ENCODE measurements at regions of chr7 and their contacts with region 1.

Region 1: GRCh38 chr7:44565097-44565794 is 8.5 kb downstream of the DDX56 start:
- DNase-seq: peak; percentile 59 to 78 (median 66)
- ATAC-seq: peak; percentile 89
- H3K4me3 ChIP-seq: no peak overlapping the region
- H3K27ac ChIP-seq: peak overlapping the region; percentile 86
- H3K4me1 ChIP-seq: peaks cover 51 to 54% of the 10 kb centered on the region in 2 experiments; a peak in 4 of 5 replicates
- H3K27me3 ChIP-seq: no peaks in the 10 kb centered on the region
- CTCF ChIP-seq: peak; percentile 86 to 97 (median 91)
- EP300 ChIP-seq: no peak
- POLR2A ChIP-seq: peak; percentile 46; the same call in 1 of the 2 replicates
- RAD21 ChIP-seq: peak; percentile 69 to 77

Region 2: GRCh38 chr7:44240983-44241510 is 324.2 kb before region 1 on chr7:
- CTCF ChIA-PET with region 1: interaction called, 7 read pairs
- POLR2A ChIA-PET with region 1: no interaction called
- in situ Hi-C with region 1: no loop called
- intact Hi-C with region 1: loop called (anchors 5 kb)
- DNase-seq: peak; percentile 84 to 90 (median 87)
- ATAC-seq: peak; percentile 95
- H3K4me3 ChIP-seq: peak overlapping the region; percentile 16; the same call in 1 of the 2 replicates
- H3K27ac ChIP-seq: no peak overlapping the region
- H3K4me1 ChIP-seq: peaks cover 0 to 45% of the 10 kb centered on the region in 2 experiments; a peak in 3 of 5 replicates
- H3K27me3 ChIP-seq: peaks cover 30 to 70% of the 10 kb centered on the region in 2 experiments
- CTCF ChIP-seq: peak; percentile 85 to 87 (median 86)
- EP300 ChIP-seq: no peak
- POLR2A ChIP-seq: no peak
- RAD21 ChIP-seq: peak; percentile 82 to 85

Region 3: DNA sequence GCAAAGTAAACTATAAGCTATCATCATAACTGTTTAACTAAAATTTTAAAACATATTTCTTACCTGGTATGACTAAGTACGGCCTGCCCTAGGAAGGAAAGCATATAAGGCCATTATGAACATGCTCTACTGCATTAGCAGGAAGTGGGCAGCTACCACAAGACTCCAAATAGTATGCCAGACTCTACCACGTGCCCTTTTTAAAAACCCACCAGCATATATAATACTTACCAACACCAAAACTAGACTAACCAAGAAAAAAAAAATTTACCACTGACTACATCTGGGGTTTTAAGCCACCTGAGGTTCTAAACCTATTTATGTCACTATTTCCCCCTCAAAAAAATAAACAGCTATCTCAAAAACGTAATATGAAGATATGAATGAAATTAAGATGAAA is 104.9 kb before region 1 on chr7:
- CTCF ChIA-PET with region 1: no interaction called
- POLR2A ChIA-PET with region 1: no interaction called
- in situ Hi-C with region 1: no loop called
- intact Hi-C with region 1: no loop called
- DNase-seq: no peak
- ATAC-seq: no peak
- H3K4me3 ChIP-seq: no peak overlapping the region
- H3K27ac ChIP-seq: no peak overlapping the region
- H3K4me1 ChIP-seq: peaks cover 0 to 9% of the 10 kb centered on the region in 2 experiments; a peak in 1 of 5 replicates
- H3K27me3 ChIP-seq: no peaks in the 10 kb centered on the region
- CTCF ChIP-seq: no peak
- EP300 ChIP-seq: no peak
- POLR2A ChIP-seq: no peak
- RAD21 ChIP-seq: no peak

Region 4: DNA sequence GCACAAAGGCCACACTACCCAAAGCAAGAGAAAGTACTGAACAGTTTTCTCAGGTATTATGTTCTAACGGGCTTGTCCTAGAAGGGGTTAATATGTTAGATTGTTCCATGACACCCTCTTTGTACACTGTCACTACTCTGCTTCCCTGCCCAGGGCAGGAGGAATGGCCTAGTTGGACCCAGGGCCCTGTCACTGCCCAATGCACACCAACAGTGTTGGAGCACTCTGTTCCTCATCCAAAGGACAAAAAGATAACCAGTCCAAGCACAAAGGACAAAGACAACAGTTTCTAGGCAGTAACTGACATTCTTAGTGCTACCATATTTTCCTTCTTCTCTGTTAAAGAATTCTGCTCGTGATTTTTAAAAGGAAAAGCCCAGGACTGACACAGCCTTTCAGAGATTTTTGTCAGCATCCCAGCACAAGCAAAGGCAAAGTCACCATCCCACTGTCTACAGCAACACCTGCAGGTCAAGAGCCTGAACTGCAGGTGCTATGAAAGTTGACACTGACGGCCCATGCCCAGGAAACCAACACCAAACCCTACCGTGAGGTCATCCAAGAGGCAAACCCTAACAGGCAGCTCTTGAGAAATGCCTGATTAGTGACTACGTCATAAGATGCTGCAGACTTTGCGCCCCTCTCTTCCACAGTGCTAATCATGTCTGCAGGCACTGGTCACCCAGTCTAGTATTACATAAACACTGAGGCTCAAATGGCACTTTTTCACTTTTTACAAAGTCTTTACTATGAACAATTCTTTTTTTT is 88.0 kb before region 1 on chr7:
- CTCF ChIA-PET with region 1: no interaction called
- POLR2A ChIA-PET with region 1: no interaction called
- in situ Hi-C with region 1: no loop called
- intact Hi-C with region 1: loop called (anchors 5 kb)
- DNase-seq: peak; percentile 70 to 77 (median 74)
- ATAC-seq: peak; percentile 96
- H3K4me3 ChIP-seq: no peak overlapping the region
- H3K27ac ChIP-seq: no peak overlapping the region
- H3K4me1 ChIP-seq: no peaks in the 10 kb centered on the region; a peak in 1 of 5 replicates
- H3K27me3 ChIP-seq: no peaks in the 10 kb centered on the region
- CTCF ChIP-seq: peak; percentile 85 to 97 (median 93)
- EP300 ChIP-seq: no peak
- POLR2A ChIP-seq: no peak
- RAD21 ChIP-seq: peak; percentile 80 to 87

Region 5: DNA sequence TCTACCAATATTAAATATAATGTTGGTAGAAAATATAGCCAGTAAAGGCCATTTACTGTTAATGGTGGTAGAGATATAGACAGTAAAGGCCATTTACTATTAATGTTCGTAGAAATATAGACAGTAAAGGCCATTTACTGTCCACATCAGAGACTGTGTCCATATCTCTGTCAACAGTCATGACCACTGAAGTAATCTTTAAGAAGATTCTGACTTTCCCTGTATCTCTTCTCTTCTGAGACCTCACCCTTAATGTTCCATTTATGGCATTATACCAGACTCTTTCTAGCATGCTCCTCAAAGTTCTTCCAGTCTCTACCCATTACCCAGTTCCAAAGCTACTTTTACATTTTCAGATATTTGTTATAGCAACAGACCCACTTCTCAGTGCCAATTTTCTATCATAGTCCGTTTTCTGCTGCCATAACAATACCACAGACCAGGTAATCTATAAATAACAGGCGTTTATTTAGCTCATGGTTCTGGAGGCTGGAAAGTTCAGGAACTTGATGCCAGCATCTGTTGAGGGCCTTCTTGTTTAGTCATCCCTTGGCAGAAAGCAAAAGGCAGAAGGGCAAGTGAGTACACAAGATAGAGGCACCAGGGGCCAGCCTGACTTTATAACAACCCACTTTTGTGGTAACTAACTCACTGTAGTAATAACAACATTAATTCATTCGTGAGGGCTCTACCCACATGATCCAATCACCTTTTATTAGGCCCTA is 66.9 kb before region 1 on chr7:
- CTCF ChIA-PET with region 1: no interaction called
- POLR2A ChIA-PET with region 1: no interaction called
- in situ Hi-C with region 1: no loop called
- intact Hi-C with region 1: loop called (anchors 5 kb)
- DNase-seq: peak in 1 of 4 experiments; percentile 17
- ATAC-seq: peak; percentile 39
- H3K4me3 ChIP-seq: no peak overlapping the region
- H3K27ac ChIP-seq: no peak overlapping the region
- H3K4me1 ChIP-seq: peaks cover 2 to 22% of the 10 kb centered on the region in 2 experiments; a peak in 3 of 5 replicates
- H3K27me3 ChIP-seq: no peaks in the 10 kb centered on the region
- CTCF ChIP-seq: no peak
- EP300 ChIP-seq: no peak
- POLR2A ChIP-seq: no peak
- RAD21 ChIP-seq: no peak

Region 6: GRCh38 chr7:44508328-44509030 is 56.8 kb before region 1 on chr7:
- CTCF ChIA-PET with region 1: no interaction called
- POLR2A ChIA-PET with region 1: no interaction called
- in situ Hi-C with region 1: no loop called
- intact Hi-C with region 1: no loop called
- DNase-seq: no peak
- ATAC-seq: no peak
- H3K4me3 ChIP-seq: no peak overlapping the region
- H3K27ac ChIP-seq: no peak overlapping the region
- H3K4me1 ChIP-seq: no peaks in the 10 kb centered on the region
- H3K27me3 ChIP-seq: no peaks in the 10 kb centered on the region
- CTCF ChIP-seq: no peak
- EP300 ChIP-seq: no peak
- POLR2A ChIP-seq: no peak
- RAD21 ChIP-seq: no peak

Region 7: GRCh38 chr7:44581879-44582603 is 16.8 kb after region 1 on chr7 and contains the start of gene TMED4:
- CTCF ChIA-PET with region 1: no interaction called
- POLR2A ChIA-PET with region 1: interaction called, 13 read pairs
- in situ Hi-C with region 1: no loop called
- intact Hi-C with region 1: no loop called
- DNase-seq: peak; percentile 99 to 100 (median 99)
- ATAC-seq: peak; percentile 95
- H3K4me3 ChIP-seq: peak within 1 kb of the TSS; percentile 81
- H3K27ac ChIP-seq: peak within 1 kb of the TSS; percentile 92
- H3K4me1 ChIP-seq: peaks cover 9 to 25% of the 10 kb centered on the region in 2 experiments; a peak in 4 of 5 replicates
- H3K27me3 ChIP-seq: no peaks in the 10 kb centered on the region
- CTCF ChIP-seq: no peak
- EP300 ChIP-seq: no peak
- POLR2A ChIP-seq: peak; percentile 90
- RAD21 ChIP-seq: no peak
- polyA plus RNA-seq, gene TMED4: 20.3 to 23.1 TPM

Measured in K562 (cell line).